Activated CD8-positive, alpha-beta T cell treated with anti-CD3 and anti-CD28 coated beads, Interleukin-2, amount 10 ng/mL, durations not matched to agents 7 days and 5 days (primary cell): ENCODE measurements at regions of chr22 and their contacts with region 1.

Region 1: GRCh38 chr22:24156913-24157821 is 24.1 kb upstream of the SUSD2 start:
- DNase-seq: peak; percentile 97
- ATAC-seq: peak; percentile 80
- H3K4me3 Mint-ChIP-seq: peak overlapping the region; percentile 94
- H3K27ac Mint-ChIP-seq: peak overlapping the region; percentile 95
- H3K4me1 Mint-ChIP-seq: peaks cover 71% of the 10 kb centered on the region
- H3K27me3 Mint-ChIP-seq: no peaks in the 10 kb centered on the region

Region 2: DNA sequence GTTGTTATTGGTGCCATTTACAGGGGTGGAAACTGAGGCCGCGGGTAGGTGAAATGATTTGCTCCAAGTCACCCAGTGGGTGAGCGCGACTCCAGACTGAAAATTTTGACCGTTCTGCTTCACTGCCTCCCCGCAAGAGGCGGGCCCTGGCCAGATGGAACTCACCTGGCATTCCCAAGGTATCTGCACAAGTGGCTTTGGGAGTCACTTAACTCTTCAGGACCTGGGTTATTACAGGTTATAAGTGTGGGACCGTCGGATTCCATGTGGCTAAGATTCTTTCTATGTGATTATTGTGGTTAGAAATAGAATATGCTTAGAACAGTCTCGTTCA is 145.5 kb before region 1 on chr22:
- CTCF ChIA-PET with region 1: interaction called, 18 read pairs
- POLR2A ChIA-PET with region 1: interaction called, 7 read pairs
- DNase-seq: no peak
- ATAC-seq: no peak
- H3K4me3 Mint-ChIP-seq: peak overlapping the region; percentile 87
- H3K27ac Mint-ChIP-seq: peak overlapping the region; percentile 87
- H3K4me1 Mint-ChIP-seq: peaks cover 32% of the 10 kb centered on the region
- H3K27me3 Mint-ChIP-seq: no peaks in the 10 kb centered on the region

Region 3: GRCh38 chr22:24106385-24107381 is 50.5 kb before region 1 on chr22:
- CTCF ChIA-PET with region 1: interaction called, 35 read pairs
- POLR2A ChIA-PET with region 1: interaction called, 4 read pairs
- DNase-seq: peak; percentile 39
- ATAC-seq: peak; percentile 52
- H3K4me3 Mint-ChIP-seq: no peak overlapping the region
- H3K27ac Mint-ChIP-seq: peak overlapping the region; percentile 52
- H3K4me1 Mint-ChIP-seq: peaks cover 36% of the 10 kb centered on the region
- H3K27me3 Mint-ChIP-seq: no peaks in the 10 kb centered on the region

Region 4: DNA sequence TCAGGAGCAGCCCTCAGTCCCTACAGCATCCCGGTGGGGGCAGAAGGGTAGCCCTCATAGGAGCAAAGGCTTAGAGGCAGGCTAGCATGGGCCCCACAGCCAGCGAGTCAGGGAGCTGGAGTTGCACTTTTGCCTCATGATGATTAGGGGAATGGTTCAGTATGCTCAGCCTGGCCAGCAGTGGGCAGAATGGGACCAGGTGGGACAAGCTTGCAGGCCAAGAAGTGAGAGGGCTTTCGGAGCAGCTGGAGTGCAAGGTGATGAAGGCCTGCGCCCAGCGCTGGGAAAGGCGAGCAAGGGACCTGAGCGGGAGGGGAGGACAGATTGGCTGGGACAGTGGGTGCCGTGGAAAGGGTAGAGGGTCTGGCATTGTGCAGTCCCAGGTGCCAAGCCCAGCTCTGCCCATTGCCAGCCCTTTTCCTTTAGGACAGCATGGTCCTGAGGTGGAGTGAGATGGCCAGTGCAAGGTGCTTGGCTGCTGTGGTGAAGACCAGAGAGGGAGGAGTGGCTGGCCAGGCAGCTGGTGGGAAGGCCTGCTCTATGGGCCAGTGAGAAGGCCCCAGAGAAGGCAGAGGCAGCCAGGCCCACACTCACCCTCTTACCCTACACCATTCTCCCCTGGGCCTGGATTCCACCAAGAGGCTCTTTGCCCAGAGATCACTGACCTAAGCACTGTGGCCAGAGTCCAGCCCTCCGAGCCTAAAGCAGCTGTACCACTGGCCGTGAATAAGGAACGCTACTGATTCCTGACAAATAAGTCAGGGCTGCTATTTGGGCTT is 23.8 kb before region 1 on chr22:
- CTCF ChIA-PET with region 1: interaction called, 132 read pairs
- POLR2A ChIA-PET with region 1: interaction called, 5 read pairs
- DNase-seq: peak; percentile 57
- ATAC-seq: peak; percentile 44
- H3K4me3 Mint-ChIP-seq: no peak overlapping the region
- H3K27ac Mint-ChIP-seq: peak overlapping the region; percentile 71
- H3K4me1 Mint-ChIP-seq: peaks cover 32% of the 10 kb centered on the region
- H3K27me3 Mint-ChIP-seq: no peaks in the 10 kb centered on the region

Region 5: DNA sequence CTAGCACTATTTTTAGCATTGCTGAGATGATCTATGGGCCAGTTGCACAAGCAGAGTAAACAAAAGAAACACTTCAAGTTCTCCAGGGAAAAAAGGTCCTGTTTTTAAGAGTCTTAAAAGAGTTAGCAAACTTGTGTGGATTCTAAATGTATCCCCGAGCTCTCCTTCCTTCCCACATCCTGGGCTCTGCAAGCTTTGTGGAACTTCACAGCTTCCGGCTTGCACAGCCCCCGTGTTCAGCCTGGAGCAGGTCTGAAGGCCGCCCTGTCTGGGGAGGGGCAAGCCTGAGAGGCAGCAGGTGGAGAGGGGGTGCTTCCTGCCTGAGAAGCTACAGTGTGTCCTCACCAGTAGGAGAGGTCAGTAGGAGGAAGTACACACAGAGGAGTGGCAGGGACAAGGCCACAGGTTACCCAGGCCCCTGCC is 11.0 kb before region 1 on chr22:
- CTCF ChIA-PET with region 1: interaction called, 73 read pairs
- POLR2A ChIA-PET with region 1: interaction called, 30 read pairs
- DNase-seq: peak; percentile 66
- ATAC-seq: peak; percentile 78
- H3K4me3 Mint-ChIP-seq: peak overlapping the region; percentile 16
- H3K27ac Mint-ChIP-seq: peak overlapping the region; percentile 82
- H3K4me1 Mint-ChIP-seq: peaks cover 76% of the 10 kb centered on the region
- H3K27me3 Mint-ChIP-seq: no peaks in the 10 kb centered on the region

Region 6: GRCh38 chr22:24198682-24199052 is 41.5 kb after region 1 on chr22:
- CTCF ChIA-PET with region 1: interaction called, 14 read pairs
- POLR2A ChIA-PET with region 1: interaction called, 3 read pairs
- DNase-seq: no peak
- ATAC-seq: no peak
- H3K4me3 Mint-ChIP-seq: peak overlapping the region; percentile 2
- H3K27ac Mint-ChIP-seq: peak overlapping the region; percentile 71
- H3K4me1 Mint-ChIP-seq: peaks cover 37% of the 10 kb centered on the region
- H3K27me3 Mint-ChIP-seq: no peaks in the 10 kb centered on the region